A673 (cell line): ENCODE measurements at regions of chr1 and their contacts with region 1.

Region 1: DNA sequence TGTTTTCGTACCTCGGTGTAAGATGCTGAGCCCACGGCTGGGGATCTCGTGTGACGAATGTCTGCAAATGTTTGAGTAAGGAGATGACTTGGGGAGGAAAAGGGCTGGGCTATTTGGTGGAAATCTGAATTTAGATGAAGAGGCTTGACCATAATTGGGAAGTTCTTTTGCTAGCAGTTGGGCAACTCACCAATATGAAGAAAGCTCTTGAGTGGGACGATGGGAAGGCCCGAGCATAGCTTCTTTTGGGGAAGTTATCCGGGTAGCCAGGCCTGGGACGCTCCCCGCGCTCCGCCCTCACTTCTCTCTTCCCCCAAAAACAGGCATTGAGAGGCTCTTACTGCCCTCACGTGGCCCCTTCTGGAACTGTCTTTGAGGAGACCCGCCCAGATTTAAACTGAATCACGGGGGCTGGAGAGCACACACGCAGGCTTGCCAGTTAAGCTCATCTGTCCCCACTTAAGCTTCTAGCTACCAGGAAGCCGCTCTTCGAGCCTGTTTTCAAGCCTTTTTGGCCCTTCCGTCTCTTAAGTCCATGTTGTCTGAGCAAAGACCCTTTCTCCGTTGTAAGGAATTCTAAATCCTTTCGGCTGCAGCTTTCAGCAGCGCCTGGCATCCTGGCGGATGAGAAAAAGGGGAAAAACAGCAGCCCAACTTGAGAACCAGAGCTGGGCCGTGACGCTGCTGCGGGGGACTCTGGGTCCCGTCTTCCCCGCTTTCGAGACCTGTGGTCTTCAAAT is 93.1 kb downstream of the NID1 start:
- DNase-seq: peak; percentile 89
- H3K4me3 ChIP-seq: peak overlapping the region; percentile 21
- H3K27ac ChIP-seq: no peak overlapping the region
- H3K4me1 ChIP-seq: no peaks in the 10 kb centered on the region
- H3K27me3 ChIP-seq: no peaks in the 10 kb centered on the region
- CTCF ChIP-seq: peak; percentile 70

Region 2: GRCh38 chr1:235105051-235106043 is 866.4 kb before region 1 on chr1:
- CTCF ChIA-PET with region 1: no interaction called
- POLR2A ChIA-PET with region 1: no interaction called
- intact Hi-C with region 1: loop called (anchors 10 kb)
- DNase-seq: no peak
- H3K4me3 ChIP-seq: no peak overlapping the region
- H3K27ac ChIP-seq: no peak overlapping the region
- H3K4me1 ChIP-seq: peaks cover 3% of the 10 kb centered on the region
- H3K27me3 ChIP-seq: no peaks in the 10 kb centered on the region
- CTCF ChIP-seq: no peak

Region 3: GRCh38 chr1:235866913-235867845 is 104.6 kb before region 1 on chr1:
- CTCF ChIA-PET with region 1: interaction called, 8 read pairs
- POLR2A ChIA-PET with region 1: no interaction called
- intact Hi-C with region 1: loop called (anchors 10 kb)
- DNase-seq: peak; percentile 88
- H3K4me3 ChIP-seq: peak overlapping the region; percentile 62
- H3K27ac ChIP-seq: peak overlapping the region; percentile 63
- H3K4me1 ChIP-seq: no peaks in the 10 kb centered on the region
- H3K27me3 ChIP-seq: no peaks in the 10 kb centered on the region
- CTCF ChIP-seq: no peak

Region 4: DNA sequence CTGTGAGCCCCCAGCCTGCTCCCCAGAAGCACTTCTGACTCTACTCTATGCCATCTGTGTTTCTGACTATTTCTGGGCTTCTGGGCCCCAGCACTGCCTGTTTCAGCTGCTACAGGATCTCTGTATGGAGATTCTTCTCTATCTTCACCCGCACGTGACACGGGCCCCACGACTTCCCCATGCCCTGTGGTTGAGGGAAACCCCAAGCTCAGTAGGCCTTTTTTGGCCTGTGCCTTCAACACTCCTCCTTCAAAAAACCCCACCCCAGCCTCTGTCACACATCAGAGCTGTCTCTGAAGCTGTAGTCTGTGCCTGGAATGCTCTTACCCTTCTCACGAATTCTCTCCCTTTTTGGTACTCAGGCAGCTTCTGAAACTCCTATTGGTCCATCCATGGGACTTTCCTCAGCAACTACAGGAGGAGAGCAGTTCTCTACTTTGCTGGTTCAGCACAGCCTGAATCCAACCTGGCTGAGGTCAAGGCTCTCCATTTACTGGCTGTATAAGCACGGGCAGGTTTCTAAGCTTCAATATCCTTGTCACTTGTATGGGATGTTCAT is 95.2 kb after region 1 on chr1:
- CTCF ChIA-PET with region 1: no interaction called
- POLR2A ChIA-PET with region 1: no interaction called
- intact Hi-C with region 1: no loop called
- DNase-seq: no peak
- H3K4me3 ChIP-seq: no peak overlapping the region
- H3K27ac ChIP-seq: no peak overlapping the region
- H3K4me1 ChIP-seq: no peaks in the 10 kb centered on the region
- H3K27me3 ChIP-seq: no peaks in the 10 kb centered on the region
- CTCF ChIP-seq: no peak

Region 5: DNA sequence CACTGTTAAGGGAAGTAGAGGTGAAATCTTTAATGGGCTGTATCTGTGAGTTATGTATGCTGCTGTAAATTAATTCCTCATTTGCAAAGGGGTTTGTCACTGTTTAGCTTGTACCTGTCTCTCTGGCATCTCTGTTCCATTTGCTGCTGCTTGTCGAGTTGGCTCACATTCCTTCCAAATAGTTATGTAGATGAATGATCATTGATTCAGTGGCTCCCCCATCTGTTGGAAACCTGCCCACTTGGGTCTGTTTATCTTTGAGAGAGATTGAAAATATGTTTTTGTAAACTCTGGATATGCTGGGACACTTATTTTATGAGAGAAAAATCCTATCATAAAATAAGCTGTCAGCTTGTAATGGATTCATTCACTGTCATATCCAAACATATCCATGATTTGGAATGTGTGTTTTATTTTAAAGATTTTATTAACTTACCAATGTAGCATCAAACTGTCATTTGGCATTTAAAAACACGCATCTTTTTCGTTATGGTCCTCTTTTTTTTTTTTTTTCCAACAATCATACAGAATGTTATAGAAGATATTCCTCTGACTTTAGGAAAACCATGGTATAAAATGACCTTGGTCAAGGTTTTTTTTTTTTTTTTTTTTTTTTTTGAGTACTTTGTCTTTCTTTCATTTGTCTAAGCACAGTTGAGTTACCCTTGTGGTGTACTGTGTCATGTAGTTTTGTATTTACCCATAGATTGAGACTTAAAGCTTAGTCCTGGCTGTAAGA is 1073.7 kb after region 1 on chr1:
- CTCF ChIA-PET with region 1: no interaction called
- POLR2A ChIA-PET with region 1: no interaction called
- intact Hi-C with region 1: no loop called
- DNase-seq: no peak
- H3K4me3 ChIP-seq: no peak overlapping the region
- H3K27ac ChIP-seq: no peak overlapping the region
- H3K4me1 ChIP-seq: no peaks in the 10 kb centered on the region
- H3K27me3 ChIP-seq: peaks cover 4% of the 10 kb centered on the region
- CTCF ChIP-seq: no peak